ENCODE measurements at regions of chr1 and their contacts with region 1.

Region 1: DNA sequence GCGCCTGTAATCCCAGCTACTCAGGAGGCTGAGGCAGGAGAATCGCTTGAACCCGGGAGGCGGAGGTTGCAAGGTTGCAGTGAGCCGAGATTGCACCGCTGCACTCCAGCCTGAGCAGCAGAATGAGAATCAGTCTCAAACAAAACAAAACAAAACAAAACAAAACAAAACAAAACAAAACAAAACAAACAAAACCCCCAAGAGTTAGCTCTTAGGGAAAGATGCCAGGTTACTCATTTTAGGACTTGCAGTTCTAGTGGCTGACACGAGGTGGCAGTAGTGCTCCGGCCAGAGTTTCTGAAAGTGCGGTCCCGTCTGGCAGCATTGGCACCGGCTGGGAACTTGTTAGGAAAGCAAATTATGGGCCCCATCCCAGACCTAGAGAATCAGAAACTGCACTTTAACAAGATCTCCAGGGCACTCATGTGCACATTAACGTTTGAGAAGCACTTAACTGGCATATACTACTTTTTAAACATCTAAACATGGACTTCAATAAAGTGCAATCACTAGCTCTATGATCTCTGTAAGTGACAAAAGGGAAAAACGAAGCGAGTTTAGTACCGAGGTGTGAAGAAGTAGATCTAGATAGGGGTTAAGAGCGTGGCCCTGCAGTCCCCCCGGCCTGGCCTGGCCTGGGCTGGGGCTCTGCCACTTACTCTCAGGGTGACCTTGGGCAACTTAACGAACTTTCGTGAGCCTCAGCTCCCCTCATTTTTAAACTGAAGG is 41.9 kb upstream of the TNFRSF1B start:
- DNase-seq: peak; percentile 87
- ATAC-seq: peak; percentile 85
- H3K4me3 ChIP-seq: no peak overlapping the region
- H3K4me3 Mint-ChIP-seq: peak overlapping the region; percentile 65
- H3K27ac ChIP-seq: no peak overlapping the region
- H3K27ac Mint-ChIP-seq: peak overlapping the region; percentile 83
- H3K4me1 ChIP-seq: peaks cover 20 to 31% of the 10 kb centered on the region in 2 donors
- H3K4me1 Mint-ChIP-seq: peaks cover 33% of the 10 kb centered on the region
- H3K27me3 ChIP-seq: no peaks in the 10 kb centered on the region
- H3K27me3 Mint-ChIP-seq: no peaks in the 10 kb centered on the region
- CTCF ChIP-seq: peak; percentile 93

Region 2: GRCh38 chr1:12138196-12139168 is 13.6 kb after region 1 on chr1:
- CTCF ChIA-PET with region 1: interaction called, 169 read pairs
- POLR2A ChIA-PET with region 1: interaction called, 3 read pairs
- intact Hi-C with region 1: no loop called
- DNase-seq: no peak
- ATAC-seq: no peak
- H3K4me3 ChIP-seq: no peak overlapping the region
- H3K4me3 Mint-ChIP-seq: no peak overlapping the region
- H3K27ac ChIP-seq: no peak overlapping the region
- H3K27ac Mint-ChIP-seq: peak overlapping the region; percentile 64
- H3K4me1 ChIP-seq: peaks cover 11 to 37% of the 10 kb centered on the region in 2 donors
- H3K4me1 Mint-ChIP-seq: peaks cover 38% of the 10 kb centered on the region
- H3K27me3 ChIP-seq: no peaks in the 10 kb centered on the region
- H3K27me3 Mint-ChIP-seq: no peaks in the 10 kb centered on the region
- CTCF ChIP-seq: no peak

Region 3: GRCh38 chr1:12161662-12162458 is 37.0 kb after region 1 on chr1:
- CTCF ChIA-PET with region 1: interaction called, 45 read pairs
- POLR2A ChIA-PET with region 1: interaction called, 5 read pairs
- intact Hi-C with region 1: loop called (anchors 5 kb)
- DNase-seq: peak; percentile 78
- ATAC-seq: peak; percentile 76
- H3K4me3 ChIP-seq: no peak overlapping the region
- H3K4me3 Mint-ChIP-seq: peak overlapping the region; percentile 76
- H3K27ac ChIP-seq: peak overlapping the region; percentile 56 to 71
- H3K27ac Mint-ChIP-seq: peak overlapping the region; percentile 91
- H3K4me1 ChIP-seq: peaks cover 48 to 73% of the 10 kb centered on the region in 2 donors
- H3K4me1 Mint-ChIP-seq: peaks cover 62% of the 10 kb centered on the region
- H3K27me3 ChIP-seq: no peaks in the 10 kb centered on the region
- H3K27me3 Mint-ChIP-seq: no peaks in the 10 kb centered on the region
- CTCF ChIP-seq: no peak

Region 4: GRCh38 chr1:12184008-12184681 is 59.3 kb after region 1 on chr1:
- CTCF ChIA-PET with region 1: interaction called, 96 read pairs
- POLR2A ChIA-PET with region 1: interaction called, 5 read pairs
- intact Hi-C with region 1: no loop called
- DNase-seq: peak; percentile 60
- ATAC-seq: peak; percentile 67
- H3K4me3 ChIP-seq: no peak overlapping the region
- H3K4me3 Mint-ChIP-seq: peak overlapping the region; percentile 67
- H3K27ac ChIP-seq: peak overlapping the region; percentile 26 to 43
- H3K27ac Mint-ChIP-seq: peak overlapping the region; percentile 87
- H3K4me1 ChIP-seq: peaks cover 25 to 62% of the 10 kb centered on the region in 2 donors
- H3K4me1 Mint-ChIP-seq: peaks cover 64% of the 10 kb centered on the region
- H3K27me3 ChIP-seq: no peaks in the 10 kb centered on the region
- H3K27me3 Mint-ChIP-seq: no peaks in the 10 kb centered on the region
- CTCF ChIP-seq: peak; percentile 24

Region 5: GRCh38 chr1:12208764-12209494 is 84.1 kb after region 1 on chr1:
- CTCF ChIA-PET with region 1: interaction called, 685 read pairs
- POLR2A ChIA-PET with region 1: interaction called, 42 read pairs
- intact Hi-C with region 1: loop called (anchors 1 kb)
- DNase-seq: peak; percentile 88
- ATAC-seq: peak; percentile 60
- H3K4me3 ChIP-seq: no peak overlapping the region
- H3K4me3 Mint-ChIP-seq: peak overlapping the region; percentile 69
- H3K27ac ChIP-seq: peak overlapping the region; percentile 28 to 72
- H3K27ac Mint-ChIP-seq: peak overlapping the region; percentile 92
- H3K4me1 ChIP-seq: peaks cover 31 to 61% of the 10 kb centered on the region in 2 donors
- H3K4me1 Mint-ChIP-seq: peaks cover 62% of the 10 kb centered on the region
- H3K27me3 ChIP-seq: no peaks in the 10 kb centered on the region
- H3K27me3 Mint-ChIP-seq: no peaks in the 10 kb centered on the region
- CTCF ChIP-seq: peak; percentile 91

Region 6: DNA sequence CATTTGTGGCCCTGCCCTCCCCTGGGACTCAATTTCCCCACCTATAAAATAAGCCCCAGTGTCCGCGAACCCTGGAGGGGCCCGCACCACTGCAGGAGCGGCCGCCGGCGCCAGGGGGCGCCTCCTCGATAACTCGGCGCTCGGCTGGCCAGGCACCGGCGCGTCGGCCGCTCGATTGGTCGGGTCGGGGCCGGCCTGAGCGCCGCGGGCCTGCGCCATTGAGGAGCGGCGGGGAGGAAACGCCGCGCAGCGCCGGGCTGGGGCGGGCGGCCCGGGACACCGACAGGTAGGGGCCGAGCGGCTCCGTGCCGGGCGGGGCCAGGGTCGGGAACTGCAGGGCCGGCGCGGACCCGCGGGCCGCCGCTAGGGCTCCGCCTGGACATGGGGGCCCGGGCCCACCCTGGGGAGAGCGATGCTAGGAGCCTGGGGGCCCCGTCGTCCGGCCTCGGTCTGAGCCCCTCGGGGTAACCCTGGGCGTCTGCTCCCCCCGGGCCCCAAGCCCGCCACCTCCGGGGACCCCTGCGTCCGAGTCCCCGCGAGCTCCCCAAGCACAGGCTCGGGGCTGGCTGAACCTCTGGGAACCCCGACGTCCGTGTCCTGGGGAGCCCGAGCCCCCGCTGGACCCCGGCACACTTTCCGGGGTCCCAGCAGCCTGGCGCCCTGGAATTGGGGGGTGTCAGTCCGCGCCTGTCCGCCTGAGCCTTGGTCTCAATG is 105.1 kb after region 1 on chr1 and contains the start of gene VPS13D:
- CTCF ChIA-PET with region 1: interaction called, 37 read pairs
- POLR2A ChIA-PET with region 1: no interaction called
- intact Hi-C with region 1: no loop called
- DNase-seq: peak; percentile 88
- ATAC-seq: peak; percentile 95
- H3K4me3 ChIP-seq: peak within 1 kb of the TSS; percentile 73 to 98 (median 87)
- H3K4me3 Mint-ChIP-seq: peak within 1 kb of the TSS; percentile 92
- H3K27ac ChIP-seq: peak within 1 kb of the TSS in 1 of 2 donors; percentile 85
- H3K27ac Mint-ChIP-seq: peak within 1 kb of the TSS; percentile 71
- H3K4me1 ChIP-seq: peaks cover 12 to 13% of the 10 kb centered on the region in 2 donors
- H3K4me1 Mint-ChIP-seq: peaks cover 21% of the 10 kb centered on the region
- H3K27me3 ChIP-seq: no peaks in the 10 kb centered on the region
- H3K27me3 Mint-ChIP-seq: peaks cover 3% of the 10 kb centered on the region
- CTCF ChIP-seq: peak; percentile 91
- total RNA-seq, gene VPS13D: 104 and 105 TPM in 2 replicates